ENCODE measurements at regions of chr1 and their contacts with region 1.

Region 1: GRCh38 chr1:25743826-25744581 is 56.0 kb upstream of the SELENON start:
- DNase-seq: peak in 3 of 4 donors; percentile 32 to 73 (median 61)
- ATAC-seq: peak; percentile 91
- H3K4me3 ChIP-seq: no peak overlapping the region
- H3K27ac ChIP-seq: peak overlapping the region; percentile 15 to 87
- H3K4me1 ChIP-seq: peaks cover 12 to 20% of the 10 kb centered on the region in 2 donors
- H3K27me3 ChIP-seq: no peaks in the 10 kb centered on the region
- CTCF ChIP-seq: peak in 1 of 2 donors; percentile 24

Region 2: DNA sequence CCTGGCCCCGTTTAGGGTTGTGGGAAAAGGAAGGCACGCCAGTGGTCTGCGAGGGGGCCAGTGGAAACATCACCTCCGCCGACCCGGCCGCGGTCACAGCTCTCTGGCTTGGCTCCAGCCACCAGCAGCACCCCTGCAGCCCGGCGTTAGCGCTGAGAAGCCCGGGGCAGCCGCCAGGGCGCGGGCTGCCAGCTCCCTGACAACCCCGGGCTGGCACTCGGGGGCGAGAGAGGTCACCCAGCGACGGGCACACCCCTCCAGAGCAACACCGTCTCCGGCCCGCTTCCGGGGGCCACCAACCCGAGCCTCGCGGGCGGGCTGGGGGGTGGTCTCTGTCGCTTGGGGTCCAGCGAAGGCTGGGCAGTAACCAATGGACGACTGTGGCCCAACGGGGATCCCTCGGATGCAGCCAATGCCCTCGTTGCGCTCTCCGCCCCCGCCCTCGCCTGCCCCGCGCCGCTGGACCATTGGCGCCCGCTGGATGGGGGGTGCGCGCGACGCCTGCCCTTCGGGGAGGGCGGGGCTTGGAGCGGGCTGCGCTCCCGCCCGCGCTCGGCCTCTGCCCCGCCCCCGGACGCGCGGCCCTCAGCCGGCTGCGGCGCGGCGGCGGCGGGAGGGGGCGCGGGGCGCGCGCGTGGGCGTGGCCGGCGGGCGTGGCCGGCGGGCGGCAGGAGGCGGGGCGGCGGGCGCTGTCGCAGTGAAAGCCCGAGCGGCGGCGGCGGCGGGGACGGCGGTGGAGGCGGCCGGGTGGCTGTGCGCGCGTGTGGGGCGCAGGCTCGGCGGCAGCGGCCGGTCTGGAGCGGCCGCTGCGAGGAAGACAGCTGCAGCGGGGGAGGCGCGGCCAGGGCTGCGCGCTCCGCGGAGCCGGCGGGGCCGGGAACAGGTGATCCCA is 127.7 kb before region 1 on chr1 and contains the start of gene MAN1C1:
- intact Hi-C with region 1: loop called in 1 of 2 experiments (anchors 10 kb)
- DNase-seq: peak; percentile 84 to 96 (median 90)
- ATAC-seq: peak; percentile 97
- H3K4me3 ChIP-seq: peak within 1 kb of the TSS; percentile 71 to 82
- H3K27ac ChIP-seq: peak within 1 kb of the TSS; percentile 56 to 69
- H3K4me1 ChIP-seq: peaks cover 5 to 41% of the 10 kb centered on the region in 2 donors
- H3K27me3 ChIP-seq: peaks cover 0 to 14% of the 10 kb centered on the region in 2 donors
- CTCF ChIP-seq: peak; percentile 31 to 56
- polyA plus RNA-seq, gene MAN1C1: 14.9 to 20.1 (median 16.1) TPM

Region 3: GRCh38 chr1:25648681-25649440 is 95.1 kb before region 1 on chr1:
- intact Hi-C with region 1: no loop called
- DNase-seq: no peak
- ATAC-seq: no peak
- H3K4me3 ChIP-seq: no peak overlapping the region
- H3K27ac ChIP-seq: no peak overlapping the region
- H3K4me1 ChIP-seq: peaks cover 4 to 6% of the 10 kb centered on the region in 2 donors
- H3K27me3 ChIP-seq: no peaks in the 10 kb centered on the region
- CTCF ChIP-seq: no peak

Measured in left lung (tissue), 14 donors.